Psoas muscle (tissue), 8 donors: ENCODE measurements at regions of chr12 and their contacts with region 1.

Region 1: GRCh38 chr12:47910486-47910885 is 5.7 kb upstream of the VDR start:
- DNase-seq: no peak
- ATAC-seq: no peak
- H3K4me3 ChIP-seq: no peak overlapping the region
- H3K27ac ChIP-seq: no peak overlapping the region
- H3K4me1 ChIP-seq: peaks cover 1% of the 10 kb centered on the region
- H3K27me3 ChIP-seq: no peaks in the 10 kb centered on the region
- CTCF ChIP-seq: no peak

Region 2: GRCh38 chr12:47899466-47899865 is 11.0 kb before region 1 on chr12:
- intact Hi-C with region 1: loop called in 1 of 2 experiments (anchors 2 kb)
- DNase-seq: no peak
- ATAC-seq: no peak
- H3K4me3 ChIP-seq: no peak overlapping the region
- H3K27ac ChIP-seq: no peak overlapping the region
- H3K4me1 ChIP-seq: peaks cover 15% of the 10 kb centered on the region
- H3K27me3 ChIP-seq: peaks cover 0 to 6% (median 2%) of the 10 kb centered on the region in 3 donors
- CTCF ChIP-seq: no peak

Region 3: DNA sequence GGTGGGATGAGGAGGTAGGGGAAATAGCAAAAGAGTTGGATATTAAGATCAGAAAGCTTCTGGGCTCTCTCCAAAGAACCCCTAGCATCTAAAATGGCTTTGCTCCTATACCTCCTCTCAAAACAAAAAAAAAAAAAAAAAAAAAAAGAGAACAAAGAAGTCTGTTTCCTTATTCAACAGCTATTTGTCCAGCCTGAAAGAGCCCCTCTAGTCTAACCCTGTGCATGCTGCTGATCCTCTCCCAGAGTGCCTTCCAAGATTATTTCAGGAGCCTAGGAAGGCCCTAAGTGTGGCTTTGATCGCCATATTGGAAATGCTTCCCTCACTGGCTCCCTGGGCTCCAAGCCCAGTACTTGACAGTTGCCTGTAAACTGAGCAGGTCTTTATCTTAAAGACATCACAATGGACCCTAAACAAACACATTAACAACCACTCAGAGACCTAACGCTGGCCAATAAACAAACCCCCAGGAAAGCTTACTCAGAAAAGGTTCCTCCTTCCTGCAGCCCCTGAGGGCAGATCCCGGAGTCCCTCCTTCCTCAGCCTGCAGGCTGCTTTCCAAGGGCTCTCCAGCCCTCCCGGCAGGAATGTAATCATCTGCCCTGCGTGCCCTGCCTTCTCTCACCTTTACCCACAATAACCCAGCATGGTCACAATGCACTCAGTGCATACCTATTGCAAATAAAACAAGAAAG is 111.1 kb after region 1 on chr12:
- intact Hi-C with region 1: no loop called
- DNase-seq: no peak
- ATAC-seq: no peak
- H3K4me3 ChIP-seq: no peak overlapping the region
- H3K27ac ChIP-seq: no peak overlapping the region
- H3K4me1 ChIP-seq: peaks cover 8% of the 10 kb centered on the region
- H3K27me3 ChIP-seq: peaks cover 0 to 3% (median 0%) of the 10 kb centered on the region in 3 donors
- CTCF ChIP-seq: no peak

Region 4: DNA sequence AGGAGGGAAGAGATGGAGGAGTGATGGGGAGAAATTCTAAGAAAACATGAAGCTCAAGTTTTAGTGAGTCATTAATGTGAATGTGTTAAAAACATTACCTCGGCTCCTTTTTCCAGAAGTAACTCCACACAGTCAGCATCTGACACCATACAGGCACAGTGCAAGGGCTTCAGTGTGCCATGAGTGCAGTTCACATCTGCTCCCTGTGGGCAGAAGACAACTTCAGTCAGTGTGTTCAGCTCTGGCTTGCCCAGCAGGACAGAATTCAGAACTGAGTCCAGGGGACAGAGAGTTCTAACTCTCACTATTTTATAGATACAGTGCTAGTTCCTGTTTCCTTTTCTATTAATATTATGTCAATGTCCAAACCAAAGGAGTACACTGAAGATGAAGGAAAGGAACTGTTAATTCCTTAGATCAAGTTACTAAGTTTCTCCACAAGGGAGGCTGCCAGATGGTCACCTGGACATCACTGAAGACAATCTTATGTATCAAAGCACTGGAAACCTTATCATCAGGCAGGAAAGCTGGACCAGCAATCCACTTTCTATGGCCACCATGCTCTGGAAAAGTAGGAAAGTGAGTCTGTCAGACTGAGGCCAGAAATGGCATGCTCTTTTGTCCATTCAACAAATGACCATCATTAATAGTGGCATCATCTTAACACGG is 240.8 kb after region 1 on chr12:
- intact Hi-C with region 1: no loop called
- DNase-seq: peak in 1 of 2 donors; percentile 81
- ATAC-seq: peak; percentile 71 to 81 (median 76)
- H3K4me3 ChIP-seq: peak overlapping the region; percentile 72
- H3K27ac ChIP-seq: peak overlapping the region; percentile 97
- H3K4me1 ChIP-seq: peaks cover 40% of the 10 kb centered on the region
- H3K27me3 ChIP-seq: no peaks in the 10 kb centered on the region
- CTCF ChIP-seq: peak; percentile 10

Region 5: GRCh38 chr12:48442191-48442828 is 531.8 kb after region 1 on chr12:
- intact Hi-C with region 1: no loop called
- DNase-seq: no peak
- ATAC-seq: no peak
- H3K4me3 ChIP-seq: no peak overlapping the region
- H3K27ac ChIP-seq: no peak overlapping the region
- H3K4me1 ChIP-seq: peaks cover 4% of the 10 kb centered on the region
- H3K27me3 ChIP-seq: no peaks in the 10 kb centered on the region
- CTCF ChIP-seq: no peak